Panc1 (cell line): ENCODE measurements at regions of chr19 and their contacts with region 1.

Region 1: DNA sequence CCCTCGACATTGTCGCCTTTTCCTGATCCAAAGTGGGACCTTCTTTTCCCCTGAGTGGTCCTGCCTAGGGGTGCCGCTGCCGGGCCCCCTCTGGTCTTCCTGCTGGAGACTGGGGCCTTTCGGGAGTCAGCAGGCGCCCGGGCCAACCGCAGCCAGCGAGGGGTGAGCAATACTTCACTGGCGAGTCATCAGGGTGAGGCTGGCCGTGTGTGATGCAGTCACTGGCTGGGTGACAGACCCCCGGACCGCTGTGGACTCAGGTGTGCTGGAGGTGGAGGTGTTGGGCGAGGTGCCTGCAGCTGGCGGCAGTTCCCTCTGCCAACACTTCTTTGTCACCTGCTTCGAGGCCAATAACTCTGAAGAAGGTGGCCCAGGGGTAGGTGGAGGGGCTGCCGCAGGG is 1.5 kb upstream of the CGB5 start:
- DNase-seq: no peak
- ATAC-seq: no peak
- H3K4me3 ChIP-seq: no peak overlapping the region
- H3K27ac ChIP-seq: no peak overlapping the region
- H3K4me1 ChIP-seq: no peaks in the 10 kb centered on the region
- H3K27me3 ChIP-seq: no peaks in the 10 kb centered on the region
- CTCF ChIP-seq: no peak

Region 2: GRCh38 chr19:48954595-48955310 is 87.4 kb before region 1 on chr19 and contains the start of gene BAX:
- CTCF ChIA-PET with region 1: no interaction called
- POLR2A ChIA-PET with region 1: no interaction called
- in situ Hi-C with region 1: no loop called
- intact Hi-C with region 1: no loop called
- DNase-seq: peak; percentile 62
- ATAC-seq: peak; percentile 97
- H3K4me3 ChIP-seq: peak within 1 kb of the TSS; percentile 81 to 87
- H3K27ac ChIP-seq: peak within 1 kb of the TSS; percentile 83
- H3K4me1 ChIP-seq: peaks cover 4% of the 10 kb centered on the region; the same call in 1 of the 2 replicates
- H3K27me3 ChIP-seq: no peaks in the 10 kb centered on the region
- CTCF ChIP-seq: no peak
- total RNA-seq, gene BAX: 100 TPM

Region 3: DNA sequence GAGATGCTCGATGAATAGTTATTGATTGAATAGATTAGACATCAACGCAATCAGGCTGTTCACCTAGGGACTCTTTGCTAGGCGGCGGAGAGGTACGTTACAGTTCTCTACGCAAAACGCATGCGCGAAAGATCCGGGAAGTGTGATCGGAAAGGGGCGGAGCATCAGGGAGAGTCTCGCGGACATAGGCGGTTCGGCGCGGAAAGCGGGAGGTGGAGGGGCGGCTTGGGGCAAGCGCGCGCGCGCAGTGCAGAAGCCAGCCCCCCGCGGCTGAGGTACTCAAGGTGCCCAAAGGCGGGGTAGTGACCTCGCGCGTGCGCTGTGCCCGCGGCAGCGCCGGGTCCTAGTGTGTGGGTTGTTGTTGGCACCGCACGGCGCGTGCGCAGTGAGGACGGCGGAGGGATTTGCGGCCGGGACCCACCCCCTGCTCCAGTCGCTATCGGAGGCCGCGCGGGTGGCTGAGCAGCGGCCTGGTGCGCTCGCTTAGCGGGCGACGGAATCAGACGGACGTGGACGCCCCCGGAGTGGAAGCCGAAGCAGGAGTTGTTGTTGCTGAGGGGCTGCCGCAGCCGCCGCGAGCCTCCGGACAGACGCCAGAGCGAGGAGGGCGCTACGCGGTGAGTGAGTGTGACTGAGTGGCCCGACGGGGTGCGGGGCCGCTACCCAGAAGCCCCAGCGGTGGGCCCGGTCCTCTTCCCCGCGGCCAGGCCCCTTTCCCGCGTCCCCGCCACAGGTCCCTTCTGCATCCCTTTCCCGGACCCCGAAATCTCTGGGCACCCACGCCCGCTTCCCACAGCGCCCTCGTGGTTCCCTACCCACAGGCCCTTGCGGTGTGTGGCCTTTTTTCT is 43.1 kb after region 1 on chr19 and contains the start of gene SNRNP70:
- CTCF ChIA-PET with region 1: no interaction called
- POLR2A ChIA-PET with region 1: no interaction called
- in situ Hi-C with region 1: no loop called
- intact Hi-C with region 1: no loop called
- DNase-seq: peak; percentile 80
- ATAC-seq: peak; percentile 97
- H3K4me3 ChIP-seq: peak within 1 kb of the TSS; percentile 93 to 95
- H3K27ac ChIP-seq: peak within 1 kb of the TSS; percentile 94
- H3K4me1 ChIP-seq: no peaks in the 10 kb centered on the region
- H3K27me3 ChIP-seq: no peaks in the 10 kb centered on the region
- CTCF ChIP-seq: no peak
- total RNA-seq, gene SNRNP70: 180 TPM

Region 4: GRCh38 chr19:49272184-49272583 is 230.0 kb after region 1 on chr19:
- CTCF ChIA-PET with region 1: interaction called, 11 read pairs
- POLR2A ChIA-PET with region 1: no interaction called
- in situ Hi-C with region 1: no loop called
- intact Hi-C with region 1: no loop called
- DNase-seq: no peak
- ATAC-seq: no peak
- H3K4me3 ChIP-seq: no peak overlapping the region
- H3K27ac ChIP-seq: no peak overlapping the region
- H3K4me1 ChIP-seq: no peaks in the 10 kb centered on the region
- H3K27me3 ChIP-seq: no peaks in the 10 kb centered on the region
- CTCF ChIP-seq: no peak

Region 5: GRCh38 chr19:49676690-49677231 is 634.6 kb after region 1 on chr19:
- CTCF ChIA-PET with region 1: no interaction called
- POLR2A ChIA-PET with region 1: no interaction called
- in situ Hi-C with region 1: no loop called
- intact Hi-C with region 1: no loop called
- DNase-seq: peak; percentile 97
- ATAC-seq: peak; percentile 85
- H3K4me3 ChIP-seq: peak overlapping the region; percentile 83 to 88
- H3K27ac ChIP-seq: peak overlapping the region; percentile 98
- H3K4me1 ChIP-seq: peaks cover 23% of the 10 kb centered on the region
- H3K27me3 ChIP-seq: no peaks in the 10 kb centered on the region
- CTCF ChIP-seq: no peak